Activated T-helper 1 cell treated with anti-CD3 and anti-CD28 coated beads, Interleukin-12 subunit alpha, Interleukin-12 subunit beta, Interleukin-2, Interleukin-4 antibody, amounts not matched to agents 30 ng/mL and 10 ng/mL and 1 ng/mL, durations not matched to agents 14 hours and 24 hours and 36 hours (primary cell): ENCODE measurements at regions of chr7 and their contacts with region 1.

Region 1: DNA sequence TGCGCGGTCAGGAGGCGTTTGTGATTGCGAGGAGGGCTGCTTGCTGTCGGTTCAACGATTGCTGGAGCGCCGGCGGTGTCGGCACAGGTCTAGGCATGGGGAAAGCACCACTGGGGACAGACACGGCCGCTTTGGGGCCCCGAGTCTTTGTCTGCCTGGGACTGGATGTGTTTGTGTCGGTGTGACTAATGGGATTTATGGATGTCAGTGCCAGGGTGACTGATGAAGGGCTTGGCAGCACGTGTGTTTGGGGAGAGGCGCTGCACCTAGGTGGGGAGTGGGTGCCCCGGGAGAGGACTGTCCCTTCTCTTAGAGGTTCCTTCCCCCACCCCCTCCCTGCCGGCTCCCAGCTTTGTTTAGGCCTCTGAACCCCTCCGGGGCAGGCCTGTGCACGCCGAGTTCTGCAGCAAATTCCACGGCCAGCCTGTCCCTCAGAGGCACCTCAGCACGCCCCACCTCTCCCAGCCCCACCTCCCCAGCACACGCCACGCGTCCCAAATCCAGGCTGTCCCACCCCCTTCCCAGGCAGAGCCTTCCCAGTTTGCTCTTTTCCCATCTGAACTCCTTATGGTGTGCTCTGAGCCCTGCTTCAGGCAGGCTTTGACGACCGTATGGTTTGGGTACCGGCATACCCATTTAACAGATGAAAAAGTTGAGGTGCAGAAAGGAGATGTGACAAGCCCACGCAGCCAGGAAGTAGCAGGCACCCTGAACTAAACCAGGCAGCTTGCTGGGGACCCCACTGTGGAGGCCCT is 6.4 kb upstream of the TNRC18 start:
- DNase-seq: no peak
- H3K4me3 Mint-ChIP-seq: no peak overlapping the region
- H3K27ac Mint-ChIP-seq: peak overlapping the region; percentile 66
- H3K4me1 Mint-ChIP-seq: peaks cover 20% of the 10 kb centered on the region
- H3K27me3 Mint-ChIP-seq: peaks cover 49% of the 10 kb centered on the region

Region 2: DNA sequence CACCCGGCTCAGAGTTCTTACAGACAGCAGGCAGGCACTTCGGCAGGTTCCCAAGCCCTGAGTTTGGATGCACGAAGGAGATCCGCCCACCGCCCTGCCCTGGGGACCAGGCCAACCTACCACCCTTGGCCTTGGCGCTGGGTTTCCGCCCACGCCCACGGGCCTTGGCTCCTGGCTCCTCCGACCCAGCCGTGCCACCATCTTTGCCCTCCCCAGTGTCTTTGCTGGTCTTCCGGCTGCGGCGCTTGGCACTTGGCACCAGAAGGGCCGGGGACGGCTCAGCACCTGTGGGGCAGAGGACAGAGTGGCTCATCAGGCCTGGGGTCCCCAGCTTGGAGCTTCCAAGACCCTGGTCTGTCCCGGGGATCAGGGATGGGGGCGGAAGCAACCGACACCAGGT is 115.2 kb before region 1 on chr7:
- intact Hi-C with region 1: no loop called
- DNase-seq: no peak
- H3K4me3 Mint-ChIP-seq: no peak overlapping the region
- H3K27ac Mint-ChIP-seq: no peak overlapping the region
- H3K4me1 Mint-ChIP-seq: no peaks in the 10 kb centered on the region
- H3K27me3 Mint-ChIP-seq: no peaks in the 10 kb centered on the region

Region 3: DNA sequence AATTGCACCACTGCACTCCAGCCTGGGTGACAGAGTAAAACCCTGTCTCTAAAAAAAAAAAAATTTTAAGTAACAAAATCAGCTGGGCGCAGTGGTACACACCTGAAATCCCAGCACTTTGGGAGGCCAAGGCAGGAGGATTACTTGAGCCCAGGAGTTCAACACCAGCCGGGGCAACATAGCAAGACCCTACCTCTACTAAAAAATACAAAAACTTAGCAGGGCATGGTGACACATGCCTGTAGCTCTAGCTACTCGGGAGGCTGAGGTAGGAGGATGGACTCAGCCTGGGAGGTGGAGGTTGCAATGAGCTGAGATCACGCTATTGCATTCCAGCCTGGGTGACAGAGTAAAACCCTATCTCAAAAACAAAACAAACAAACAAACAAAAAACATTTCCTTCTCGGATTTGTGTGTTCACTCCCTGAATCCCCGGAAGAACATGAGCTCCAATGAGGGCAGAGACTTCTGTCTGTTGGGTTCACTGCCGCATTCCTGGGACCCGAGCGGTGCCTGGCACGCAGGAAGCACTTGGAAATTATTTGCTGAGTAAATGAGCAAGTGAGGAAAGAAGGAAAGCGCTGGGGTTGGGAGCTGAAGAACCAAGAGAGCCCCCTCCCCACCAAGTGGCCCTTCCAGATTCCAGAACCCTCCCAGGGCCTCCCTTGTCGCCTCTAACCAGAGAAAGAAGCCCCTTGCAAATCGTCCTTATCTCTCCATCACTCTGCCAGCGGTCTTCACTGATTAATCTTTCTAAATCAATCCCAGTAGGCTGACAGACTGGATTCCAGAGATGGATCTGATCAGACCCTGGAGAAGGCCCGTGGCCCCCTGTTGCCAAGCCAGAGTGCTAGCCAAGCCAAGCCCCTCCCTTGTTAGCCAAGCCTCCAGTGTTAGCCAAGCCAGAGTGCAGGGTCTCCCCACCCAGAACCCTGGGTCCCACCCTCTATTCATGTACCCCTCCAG is 12.6 kb before region 1 on chr7:
- intact Hi-C with region 1: loop called (anchors 2 kb)
- DNase-seq: no peak
- H3K4me3 Mint-ChIP-seq: no peak overlapping the region
- H3K27ac Mint-ChIP-seq: no peak overlapping the region
- H3K4me1 Mint-ChIP-seq: no peaks in the 10 kb centered on the region
- H3K27me3 Mint-ChIP-seq: peaks cover 60% of the 10 kb centered on the region